GM12878 (cell line): ENCODE measurements at regions of chr7 and their contacts with region 1.

Region 1: DNA sequence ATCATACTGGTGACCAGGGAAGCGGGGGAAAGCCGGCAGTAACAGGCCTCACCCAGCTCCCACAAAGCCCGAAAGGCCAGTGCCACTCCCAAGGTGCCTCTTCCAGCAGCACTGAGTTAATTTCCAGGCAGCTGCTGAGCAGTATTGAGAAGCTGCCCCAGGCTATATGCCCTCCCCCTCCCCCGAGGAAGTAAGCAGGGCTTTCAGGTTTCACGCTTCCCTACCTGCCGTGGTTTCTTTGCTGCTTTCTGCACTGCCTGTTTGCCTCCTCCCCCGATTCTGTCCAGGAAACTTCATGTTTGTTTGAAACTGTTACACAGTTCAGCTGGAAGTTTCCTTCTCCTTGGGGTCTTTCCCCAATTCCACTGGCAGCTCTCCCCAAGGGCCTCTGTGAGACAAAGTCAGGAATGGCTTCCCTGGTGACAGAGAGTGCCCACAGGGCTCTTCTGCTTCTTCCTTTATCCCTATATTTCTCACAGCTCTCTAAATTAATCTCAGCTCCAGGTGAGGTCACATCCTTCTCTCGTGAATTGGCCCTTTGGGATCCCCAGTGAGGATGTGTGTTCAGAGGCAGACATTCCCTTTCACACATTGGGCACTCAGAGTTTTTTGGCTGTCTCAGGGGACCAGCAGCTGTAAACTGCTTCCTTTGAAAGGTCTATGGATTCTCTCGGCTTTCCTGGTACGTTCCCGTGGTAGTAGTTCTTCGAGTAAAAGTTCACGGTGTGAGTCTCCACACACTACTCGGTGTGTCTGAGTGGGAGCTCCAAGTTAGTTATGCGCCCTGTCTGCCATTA is 19.4 kb downstream of the C1GALT1 start:
- DNase-seq: peak; percentile 48
- ATAC-seq: peak; percentile 99
- H3K4me3 ChIP-seq: peak overlapping the region; percentile 59
- H3K27ac ChIP-seq: peak overlapping the region; percentile 54; the same call in 1 of the 2 replicates
- H3K4me1 ChIP-seq: peaks cover 16% of the 10 kb centered on the region
- H3K27me3 ChIP-seq: no peaks in the 10 kb centered on the region
- CTCF ChIP-seq: no peak
- EP300 ChIP-seq: no peak
- POLR2A ChIP-seq: no peak
- RAD21 ChIP-seq: 0 out of 2 replicates have a peak, but pooled peaks have one; percentile 7

Region 2: DNA sequence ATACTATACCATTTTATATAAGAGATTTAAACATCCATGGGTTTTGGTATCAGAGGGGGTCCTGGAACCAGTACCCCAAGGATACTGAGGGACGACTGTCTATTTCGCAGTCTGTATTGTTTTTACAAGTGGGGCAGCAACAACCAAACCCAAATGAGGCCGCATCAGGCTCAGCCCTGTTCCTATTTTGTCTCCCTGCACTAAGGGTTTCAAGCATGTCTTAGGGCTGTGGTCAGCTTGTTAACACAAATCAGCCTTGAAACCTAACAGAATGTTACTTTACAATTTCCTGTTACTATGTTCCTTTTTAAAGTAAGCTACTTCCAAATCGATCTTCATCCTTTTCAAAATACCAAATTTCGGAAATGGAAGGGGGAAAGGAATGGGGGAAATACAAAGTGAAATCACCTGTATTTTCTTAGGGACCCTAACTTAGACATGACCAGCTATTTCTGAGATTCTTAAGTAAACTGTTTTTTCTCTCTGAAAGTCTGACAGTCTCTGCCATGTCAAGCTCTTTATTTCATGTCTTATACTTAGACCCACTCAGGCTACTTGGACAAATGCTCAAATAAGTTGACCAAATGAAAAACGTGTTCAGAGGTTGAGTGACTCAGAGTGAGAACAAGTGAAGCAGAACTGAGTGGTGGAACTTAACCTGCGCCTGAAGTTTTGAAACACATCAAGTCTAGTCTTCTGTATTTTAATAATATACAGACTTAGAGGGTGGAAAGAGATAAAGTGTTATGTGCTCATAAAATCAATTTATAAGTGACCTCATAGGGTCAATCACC is 56.3 kb after region 1 on chr7:
- CTCF ChIA-PET with region 1: no interaction called
- POLR2A ChIA-PET with region 1: no interaction called
- RAD21 ChIA-PET with region 1: interaction called, 6 read pairs
- SMC1A ChIA-PET with region 1: interaction called, 7 read pairs
- in situ Hi-C with region 1: no loop called
- intact Hi-C with region 1: loop called (anchors 5 kb)
- DNase-seq: peak; percentile 86
- ATAC-seq: peak; percentile 96
- H3K4me3 ChIP-seq: peak overlapping the region; percentile 47; the same call in 1 of the 2 replicates
- H3K27ac ChIP-seq: peak overlapping the region; percentile 59
- H3K4me1 ChIP-seq: peaks cover 20% of the 10 kb centered on the region
- H3K27me3 ChIP-seq: no peaks in the 10 kb centered on the region
- CTCF ChIP-seq: no peak
- EP300 ChIP-seq: peak in 1 of 2 experiments; percentile 69; a peak in 1 of 4 replicates
- POLR2A ChIP-seq: no peak
- RAD21 ChIP-seq: no peak